CD4-positive, alpha-beta T cell (primary cell): ENCODE measurements at regions of chr20 and their contacts with region 1.

Region 1: GRCh38 chr20:58094160-58094559 is 134.3 kb downstream of the ANKRD60 start:
- DNase-seq: no peak
- ATAC-seq: no peak
- H3K4me3 ChIP-seq: no peak overlapping the region
- H3K4me3 Mint-ChIP-seq: no peak overlapping the region
- H3K27ac ChIP-seq: no peak overlapping the region
- H3K27ac Mint-ChIP-seq: no peak overlapping the region
- H3K4me1 ChIP-seq: no peaks in the 10 kb centered on the region
- H3K4me1 Mint-ChIP-seq: no peaks in the 10 kb centered on the region
- H3K27me3 ChIP-seq: no peaks in the 10 kb centered on the region
- H3K27me3 Mint-ChIP-seq: peaks cover 14% of the 10 kb centered on the region
- CTCF ChIP-seq: no peak

Region 2: DNA sequence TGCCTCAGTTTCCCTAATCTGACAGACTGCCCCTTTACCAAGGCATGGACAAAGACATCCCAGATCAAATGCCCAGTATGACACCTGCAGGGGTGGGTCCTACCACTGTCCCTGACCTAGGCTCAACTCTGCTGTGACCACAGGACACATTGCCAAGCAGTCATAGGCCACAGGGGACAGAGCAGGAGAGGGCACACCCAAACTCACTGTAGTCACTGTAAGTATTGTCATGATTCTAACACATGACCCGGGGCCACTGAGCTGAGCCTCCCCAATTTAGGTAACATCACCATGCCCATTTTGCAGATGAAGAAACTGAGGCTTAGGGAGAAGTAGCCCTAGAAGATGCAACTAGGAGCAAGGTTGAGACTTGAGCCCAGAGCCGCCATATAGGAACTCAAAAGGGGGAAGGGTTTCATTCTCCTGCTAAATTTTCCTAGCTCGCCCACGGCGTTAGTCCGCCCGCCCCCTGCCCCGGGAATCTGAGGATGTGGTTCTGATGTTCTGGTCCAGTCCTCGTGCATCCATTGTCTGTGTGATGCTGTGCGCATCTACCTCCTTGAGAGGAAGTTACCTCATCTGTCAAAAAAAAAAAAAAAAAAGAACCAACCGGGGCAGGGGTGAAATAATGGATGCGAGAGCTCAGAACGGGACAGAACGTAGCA is 429.1 kb before region 1 on chr20:
- CTCF ChIA-PET with region 1: no interaction called
- POLR2A ChIA-PET with region 1: no interaction called
- intact Hi-C with region 1: loop called in 1 of 2 experiments (anchors 5 kb)
- DNase-seq: no peak
- ATAC-seq: no peak
- H3K4me3 ChIP-seq: no peak overlapping the region
- H3K4me3 Mint-ChIP-seq: no peak overlapping the region
- H3K27ac ChIP-seq: no peak overlapping the region
- H3K27ac Mint-ChIP-seq: no peak overlapping the region
- H3K4me1 ChIP-seq: no peaks in the 10 kb centered on the region
- H3K4me1 Mint-ChIP-seq: no peaks in the 10 kb centered on the region
- H3K27me3 ChIP-seq: no peaks in the 10 kb centered on the region
- H3K27me3 Mint-ChIP-seq: no peaks in the 10 kb centered on the region
- CTCF ChIP-seq: no peak

Region 3: GRCh38 chr20:58160451-58161061 is 66.4 kb after region 1 on chr20:
- CTCF ChIA-PET with region 1: no interaction called
- POLR2A ChIA-PET with region 1: no interaction called
- intact Hi-C with region 1: no loop called
- DNase-seq: no peak
- ATAC-seq: no peak
- H3K4me3 ChIP-seq: no peak overlapping the region
- H3K4me3 Mint-ChIP-seq: no peak overlapping the region
- H3K27ac ChIP-seq: no peak overlapping the region
- H3K27ac Mint-ChIP-seq: no peak overlapping the region
- H3K4me1 ChIP-seq: no peaks in the 10 kb centered on the region
- H3K4me1 Mint-ChIP-seq: no peaks in the 10 kb centered on the region
- H3K27me3 ChIP-seq: no peaks in the 10 kb centered on the region
- H3K27me3 Mint-ChIP-seq: peaks cover 8% of the 10 kb centered on the region
- CTCF ChIP-seq: no peak